ENCODE measurements at regions of chr1 and their contacts with region 1.

Region 1: DNA sequence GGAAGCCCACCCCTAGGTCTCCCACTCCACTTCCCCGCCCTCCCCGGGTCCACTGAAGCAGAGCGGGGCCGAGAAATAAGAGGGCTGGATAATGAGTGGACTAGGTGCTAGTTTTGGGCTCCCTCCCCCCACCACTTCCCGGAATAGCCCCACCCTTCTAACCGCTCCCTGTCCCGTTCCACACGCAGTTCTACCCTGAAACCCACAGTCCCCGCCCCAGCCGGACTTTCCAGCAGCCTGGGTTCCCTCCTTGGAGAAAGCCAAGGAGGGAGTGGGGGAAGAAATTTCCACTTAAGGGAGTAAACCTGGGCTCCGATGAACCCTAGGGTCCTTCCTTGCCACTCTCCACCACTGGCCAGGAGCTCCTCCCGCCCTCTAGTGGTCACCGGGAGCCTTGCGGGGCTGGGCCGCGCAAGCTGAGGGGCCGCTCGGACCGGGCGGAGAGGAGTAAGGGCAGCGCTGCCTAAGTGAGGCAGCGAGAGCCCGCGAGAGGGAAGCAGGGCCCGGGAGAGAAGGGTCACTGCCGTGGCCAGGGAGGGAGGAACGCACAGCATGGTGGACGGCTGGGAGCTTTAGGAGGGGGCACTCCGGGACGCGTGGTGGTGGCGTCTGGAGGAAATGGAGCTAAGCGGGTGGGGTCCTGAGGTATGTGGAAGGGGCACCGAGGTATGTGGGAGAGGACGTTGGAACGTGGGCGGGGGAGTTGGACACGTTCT is 14.3 kb downstream of the THBS3 start:
- DNase-seq: peak; percentile 93

Region 2: GRCh38 chr1:154419620-154420571 is 773.5 kb before region 1 on chr1:
- CTCF ChIA-PET with region 1: no interaction called
- POLR2A ChIA-PET with region 1: no interaction called
- DNase-seq: no peak

Region 3: DNA sequence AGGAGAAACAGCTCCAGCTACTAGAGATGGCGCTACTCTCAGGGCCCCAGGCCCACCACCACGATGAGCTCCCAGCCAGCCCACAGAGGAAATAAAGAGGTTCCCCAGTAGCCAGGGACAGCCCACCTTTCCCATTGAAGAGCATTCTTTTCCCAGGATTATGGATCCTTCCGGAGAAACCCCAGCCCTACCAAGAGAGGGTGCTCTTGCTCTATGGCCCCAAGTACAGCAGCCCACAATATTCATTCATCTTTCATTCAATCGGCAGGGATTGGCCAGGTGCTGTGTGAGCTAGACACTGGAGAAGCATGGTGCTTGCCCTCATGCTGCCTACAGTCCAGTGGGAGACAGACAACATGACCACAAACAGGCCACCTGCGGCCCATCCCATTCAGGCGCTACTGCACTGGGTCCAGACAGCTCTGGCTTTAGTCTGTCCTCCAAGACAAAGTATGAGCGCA is 286.8 kb before region 1 on chr1:
- CTCF ChIA-PET with region 1: no interaction called
- POLR2A ChIA-PET with region 1: no interaction called
- DNase-seq: peak; percentile 14

Region 4: GRCh38 chr1:155218854-155219591 is 25.6 kb after region 1 on chr1:
- CTCF ChIA-PET with region 1: interaction called, 3 read pairs
- POLR2A ChIA-PET with region 1: interaction called, 14 read pairs
- DNase-seq: peak; percentile 74

Region 5: DNA sequence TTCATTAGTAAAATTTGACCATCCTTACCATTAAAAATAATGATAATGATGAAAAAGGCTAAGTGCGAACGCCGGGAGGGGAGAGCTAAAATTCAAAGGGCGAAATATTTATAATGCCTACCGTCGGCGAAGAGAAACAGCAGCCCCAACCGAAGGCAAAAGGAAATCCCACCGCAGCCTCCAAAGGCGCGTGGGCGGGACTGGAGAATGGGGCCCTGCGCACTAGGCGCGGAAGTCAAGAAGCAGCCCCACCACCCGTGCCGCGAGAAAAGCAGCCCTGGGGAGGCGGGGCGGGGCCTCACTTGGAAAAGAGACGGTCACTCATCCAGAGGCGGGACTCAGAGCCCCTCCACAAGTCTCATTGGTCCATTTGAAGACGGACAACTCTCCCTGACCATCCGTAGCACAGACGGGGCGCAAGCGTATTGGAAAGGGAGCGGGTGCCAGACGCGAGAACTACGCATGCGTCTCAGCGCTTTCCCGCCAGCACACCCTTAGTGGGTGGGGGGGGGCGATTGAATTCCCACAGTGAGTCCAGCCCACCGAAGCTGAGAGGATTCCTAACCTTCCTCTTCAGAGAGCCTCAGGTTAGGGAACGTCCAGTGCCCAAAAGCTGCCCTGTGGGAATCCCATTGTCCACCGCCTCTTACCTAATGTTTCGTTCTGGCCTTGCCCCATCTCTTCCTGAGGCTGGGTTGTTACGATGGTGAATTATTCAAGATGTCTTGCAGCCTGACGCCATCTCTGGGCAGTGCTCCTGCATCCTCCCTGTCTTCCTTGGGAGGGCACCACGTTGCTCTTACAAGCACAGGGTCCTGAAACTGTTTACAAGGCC is 34.0 kb after region 1 on chr1:
- CTCF ChIA-PET with region 1: interaction called, 6 read pairs
- POLR2A ChIA-PET with region 1: interaction called, 23 read pairs
- DNase-seq: peak; percentile 100

Region 6: GRCh38 chr1:155273343-155274245 is 80.2 kb after region 1 on chr1 and contains the start of gene CLK2:
- CTCF ChIA-PET with region 1: no interaction called
- POLR2A ChIA-PET with region 1: no interaction called
- DNase-seq: peak; percentile 97

Region 7: DNA sequence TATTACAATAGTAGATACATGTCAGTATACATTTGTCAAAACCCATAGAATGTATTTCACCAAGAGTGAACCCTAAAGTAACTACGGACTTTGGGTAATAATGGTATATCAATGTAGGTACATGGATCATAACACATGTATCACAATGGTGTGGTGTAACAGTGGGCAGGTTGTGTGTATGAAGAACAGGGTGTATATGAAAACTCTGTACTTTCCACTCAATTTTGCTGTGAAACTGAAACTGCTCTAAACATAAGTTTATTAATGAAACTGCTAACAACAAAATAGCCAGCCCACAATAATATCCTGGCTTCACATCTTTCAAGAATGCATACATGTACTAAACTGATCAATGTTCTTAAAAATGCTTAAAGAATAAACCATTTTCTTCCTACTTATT is 217.5 kb after region 1 on chr1:
- CTCF ChIA-PET with region 1: no interaction called
- POLR2A ChIA-PET with region 1: no interaction called
- DNase-seq: no peak